H1 (cell line): ENCODE measurements at regions of chr6 and their contacts with region 1.

Region 1: GRCh38 chr6:40308533-40309306 is 278.4 kb downstream of the LRFN2 start:
- DNase-seq: peak; percentile 29 to 98
- H3K4me3 ChIP-seq: no peak overlapping the region
- H3K27ac ChIP-seq: no peak overlapping the region
- H3K4me1 ChIP-seq: peaks cover 0 to 5% (median 1%) of the 10 kb centered on the region in 4 experiments; a peak in 2 of 7 replicates
- H3K27me3 ChIP-seq: no peaks in the 10 kb centered on the region
- CTCF ChIP-seq: peak; percentile 87 to 99 (median 89)
- EP300 ChIP-seq: no peak
- POLR2A ChIP-seq: no peak
- RAD21 ChIP-seq: peak; percentile 96

Region 2: GRCh38 chr6:39980839-39981580 is 327.7 kb before region 1 on chr6:
- CTCF ChIA-PET with region 1: interaction called, 29 read pairs
- POLR2A ChIA-PET with region 1: no interaction called
- DNase-seq: peak; percentile 7 to 48
- H3K4me3 ChIP-seq: no peak overlapping the region
- H3K27ac ChIP-seq: no peak overlapping the region
- H3K4me1 ChIP-seq: peaks cover 0 to 6% (median 2%) of the 10 kb centered on the region in 4 experiments; a peak in 2 of 7 replicates
- H3K27me3 ChIP-seq: no peaks in the 10 kb centered on the region
- CTCF ChIP-seq: peak; percentile 24 to 71 (median 62)
- EP300 ChIP-seq: no peak
- POLR2A ChIP-seq: no peak
- RAD21 ChIP-seq: peak; percentile 86 to 90

Region 3: GRCh38 chr6:40295251-40295949 is 13.3 kb before region 1 on chr6:
- CTCF ChIA-PET with region 1: interaction called, 17 read pairs
- POLR2A ChIA-PET with region 1: no interaction called
- DNase-seq: no peak
- H3K4me3 ChIP-seq: no peak overlapping the region
- H3K27ac ChIP-seq: no peak overlapping the region
- H3K4me1 ChIP-seq: peaks cover 0 to 8% (median 5%) of the 10 kb centered on the region in 4 experiments; a peak in 6 of 7 replicates
- H3K27me3 ChIP-seq: no peaks in the 10 kb centered on the region
- CTCF ChIP-seq: no peak
- EP300 ChIP-seq: no peak
- POLR2A ChIP-seq: no peak
- RAD21 ChIP-seq: no peak

Region 4: GRCh38 chr6:40320441-40320840 is 11.7 kb after region 1 on chr6:
- CTCF ChIA-PET with region 1: interaction called, 32 read pairs
- POLR2A ChIA-PET with region 1: interaction called, 3 read pairs
- DNase-seq: no peak
- H3K4me3 ChIP-seq: no peak overlapping the region
- H3K27ac ChIP-seq: no peak overlapping the region
- H3K4me1 ChIP-seq: peaks cover 2 to 11% (median 7%) of the 10 kb centered on the region in 4 experiments; a peak in 4 of 7 replicates
- H3K27me3 ChIP-seq: no peaks in the 10 kb centered on the region; a peak in 2 of 7 replicates
- CTCF ChIP-seq: no peak
- EP300 ChIP-seq: no peak
- POLR2A ChIP-seq: no peak
- RAD21 ChIP-seq: no peak

Region 5: DNA sequence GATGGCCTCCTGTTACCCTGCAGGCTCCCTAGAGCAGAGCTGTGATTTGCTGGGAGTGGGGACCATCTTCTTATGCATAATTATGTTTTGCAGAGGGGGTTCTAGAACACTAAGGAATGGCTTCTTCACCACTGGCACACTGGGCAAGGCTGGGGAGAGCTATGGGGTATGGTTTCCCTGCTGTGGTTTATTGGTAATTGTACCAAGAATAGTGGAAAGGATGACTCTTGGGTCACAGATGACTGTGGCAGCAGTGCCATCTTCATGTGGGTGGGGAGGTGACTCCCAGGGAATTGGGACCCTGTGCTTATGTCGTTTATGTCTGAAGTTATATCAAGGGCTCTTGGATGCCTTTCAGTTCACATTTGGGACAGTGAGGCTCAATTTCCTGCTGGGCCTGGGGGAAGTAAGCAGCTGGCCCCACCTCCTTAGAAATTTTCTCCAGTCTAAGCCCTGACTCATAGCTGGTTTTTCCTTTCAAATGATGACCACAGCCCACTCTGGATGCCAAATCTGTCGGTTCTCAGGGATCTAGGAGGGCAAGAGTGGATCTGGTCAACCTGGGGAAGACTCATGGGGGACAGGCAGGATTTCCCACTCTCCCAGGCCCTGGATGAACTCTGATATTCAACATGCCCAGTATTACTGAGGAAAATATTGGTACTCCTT is 47.7 kb after region 1 on chr6:
- CTCF ChIA-PET with region 1: no interaction called
- POLR2A ChIA-PET with region 1: no interaction called
- DNase-seq: peak in 1 of 2 experiments; percentile 16
- H3K4me3 ChIP-seq: no peak overlapping the region
- H3K27ac ChIP-seq: no peak overlapping the region
- H3K4me1 ChIP-seq: peaks cover 3 to 17% (median 11%) of the 10 kb centered on the region in 4 experiments; a peak in 5 of 7 replicates
- H3K27me3 ChIP-seq: no peaks in the 10 kb centered on the region
- CTCF ChIP-seq: no peak
- EP300 ChIP-seq: no peak
- POLR2A ChIP-seq: no peak
- RAD21 ChIP-seq: no peak